BJ (cell line): ENCODE measurements at regions of chr3 and their contacts with region 1.

Region 1: DNA sequence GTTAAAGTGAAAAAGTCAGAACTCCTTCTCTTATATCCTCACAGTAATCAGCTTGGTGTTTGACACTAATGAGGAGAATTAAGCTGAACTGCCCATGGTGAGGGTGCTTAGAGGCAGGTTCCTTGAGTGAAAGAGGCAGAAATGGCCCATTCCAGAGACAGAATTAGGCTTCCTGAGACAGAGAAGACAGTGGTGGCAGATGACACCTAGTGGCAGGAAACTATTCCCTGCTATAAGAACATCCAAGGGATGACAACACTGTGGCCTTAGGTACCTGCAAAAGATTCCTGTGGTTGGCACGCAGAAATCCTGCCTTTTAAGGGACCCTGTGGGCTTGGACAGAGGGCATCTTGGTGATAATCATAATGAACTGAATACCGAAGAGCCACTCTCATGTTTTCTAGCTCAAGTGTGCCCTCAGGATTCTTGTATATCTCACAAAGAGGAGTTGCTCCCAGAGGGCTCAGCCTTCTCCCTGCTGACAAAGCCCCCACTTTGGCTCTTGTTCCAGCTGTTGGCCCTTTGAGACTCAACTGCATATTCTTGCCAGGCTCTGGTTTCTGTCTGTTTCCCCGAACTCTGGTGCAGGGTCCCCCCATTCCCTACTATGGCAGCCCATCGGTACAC is 56.0 kb downstream of the KBTBD12 start:
- DNase-seq: no peak
- H3K4me3 ChIP-seq: no peak overlapping the region
- H3K27me3 ChIP-seq: peaks cover 9% of the 10 kb centered on the region
- CTCF ChIP-seq: peak; percentile 79

Region 2: GRCh38 chr3:127646501-127647046 is 324.5 kb before region 1 on chr3:
- CTCF ChIA-PET with region 1: interaction called, 50 read pairs
- POLR2A ChIA-PET with region 1: no interaction called
- DNase-seq: no peak
- H3K4me3 ChIP-seq: no peak overlapping the region
- H3K27me3 ChIP-seq: peaks cover 3% of the 10 kb centered on the region
- CTCF ChIP-seq: no peak

Region 3: GRCh38 chr3:127690823-127691452 is 280.1 kb before region 1 on chr3:
- CTCF ChIA-PET with region 1: interaction called, 23 read pairs
- POLR2A ChIA-PET with region 1: no interaction called
- DNase-seq: no peak
- H3K4me3 ChIP-seq: no peak overlapping the region
- H3K27me3 ChIP-seq: no peaks in the 10 kb centered on the region
- CTCF ChIP-seq: peak; percentile 91

Region 4: GRCh38 chr3:128051837-128052594 is 80.9 kb after region 1 on chr3 and contains the start of gene SEC61A1:
- CTCF ChIA-PET with region 1: no interaction called
- POLR2A ChIA-PET with region 1: no interaction called
- DNase-seq: peak; percentile 69
- H3K4me3 ChIP-seq: peak within 1 kb of the TSS; percentile 99
- H3K27me3 ChIP-seq: no peaks in the 10 kb centered on the region; the same call in 1 of the 2 replicates
- CTCF ChIP-seq: no peak
- polyA plus RNA-seq, gene SEC61A1: 458 and 510 TPM in 2 replicates